ENCODE measurements at regions of chr15 and their contacts with region 1.

Region 1: GRCh38 chr15:34987985-34988873 is at the start of gene ZNF770:
- DNase-seq: peak; percentile 60
- H3K4me3 ChIP-seq: peak within 1 kb of the TSS; percentile 81 to 88
- H3K27ac ChIP-seq: peak within 1 kb of the TSS; percentile 96 to 97
- H3K4me1 ChIP-seq: peaks cover 4% of the 10 kb centered on the region
- H3K27me3 ChIP-seq: no peaks in the 10 kb centered on the region
- CTCF ChIP-seq: peak in 2 of 4 experiments; percentile 37 to 44
- POLR2A ChIP-seq: peak; percentile 64
- total RNA-seq, gene ZNF770: 29.6 to 32.0 TPM

Region 2: DNA sequence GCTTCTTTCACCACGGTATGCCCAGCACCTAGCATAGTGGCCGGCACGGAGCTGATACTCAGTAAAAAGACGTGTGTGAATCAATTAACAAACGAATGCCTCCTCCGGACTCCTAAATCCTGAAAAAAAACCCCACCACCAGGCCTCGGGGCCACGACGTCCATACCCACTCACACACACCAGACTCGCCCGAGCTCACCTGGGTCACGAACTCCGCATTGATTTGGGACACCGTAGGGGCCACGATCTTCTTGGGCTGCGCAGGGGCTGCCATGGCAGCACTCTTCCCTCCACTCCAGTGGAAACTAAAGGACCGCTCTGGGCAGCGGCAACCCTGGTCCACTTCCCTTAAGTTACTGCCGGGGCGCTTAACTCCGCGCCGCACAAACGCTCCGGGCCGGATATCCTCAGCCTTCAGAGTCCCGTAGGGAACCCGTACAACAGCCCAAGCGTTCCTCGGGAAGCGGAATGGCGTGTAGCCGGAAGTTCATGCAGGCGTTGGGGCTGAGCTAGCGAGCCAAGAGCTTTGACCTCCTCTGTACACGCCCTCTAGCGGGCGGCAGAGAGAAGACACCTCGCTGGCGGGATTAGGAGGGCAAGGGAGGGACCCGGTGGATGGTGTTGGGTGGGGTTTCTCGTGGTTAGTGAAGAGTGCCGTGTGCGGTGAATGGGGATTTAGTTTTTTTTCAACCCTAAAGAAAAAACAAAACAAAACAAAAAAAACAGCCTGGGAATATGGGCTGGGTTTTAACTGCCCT is 18.7 kb before region 1 on chr15 and contains the start of gene AQR:
- intact Hi-C with region 1: loop called (anchors 1 kb)
- DNase-seq: peak; percentile 96
- H3K4me3 ChIP-seq: peak within 1 kb of the TSS; percentile 64 to 68
- H3K27ac ChIP-seq: peak within 1 kb of the TSS; percentile 71 to 75
- H3K4me1 ChIP-seq: no peaks in the 10 kb centered on the region
- H3K27me3 ChIP-seq: no peaks in the 10 kb centered on the region
- CTCF ChIP-seq: peak; percentile 60 to 98 (median 92)
- POLR2A ChIP-seq: peak; percentile 44
- total RNA-seq, gene AQR: 32.9 to 34.0 TPM

Measured in prostate gland (tissue), 2 donors.